Left colon (tissue), 2 donors: ENCODE measurements at regions of chr17 and their contacts with region 1.

Region 1: DNA sequence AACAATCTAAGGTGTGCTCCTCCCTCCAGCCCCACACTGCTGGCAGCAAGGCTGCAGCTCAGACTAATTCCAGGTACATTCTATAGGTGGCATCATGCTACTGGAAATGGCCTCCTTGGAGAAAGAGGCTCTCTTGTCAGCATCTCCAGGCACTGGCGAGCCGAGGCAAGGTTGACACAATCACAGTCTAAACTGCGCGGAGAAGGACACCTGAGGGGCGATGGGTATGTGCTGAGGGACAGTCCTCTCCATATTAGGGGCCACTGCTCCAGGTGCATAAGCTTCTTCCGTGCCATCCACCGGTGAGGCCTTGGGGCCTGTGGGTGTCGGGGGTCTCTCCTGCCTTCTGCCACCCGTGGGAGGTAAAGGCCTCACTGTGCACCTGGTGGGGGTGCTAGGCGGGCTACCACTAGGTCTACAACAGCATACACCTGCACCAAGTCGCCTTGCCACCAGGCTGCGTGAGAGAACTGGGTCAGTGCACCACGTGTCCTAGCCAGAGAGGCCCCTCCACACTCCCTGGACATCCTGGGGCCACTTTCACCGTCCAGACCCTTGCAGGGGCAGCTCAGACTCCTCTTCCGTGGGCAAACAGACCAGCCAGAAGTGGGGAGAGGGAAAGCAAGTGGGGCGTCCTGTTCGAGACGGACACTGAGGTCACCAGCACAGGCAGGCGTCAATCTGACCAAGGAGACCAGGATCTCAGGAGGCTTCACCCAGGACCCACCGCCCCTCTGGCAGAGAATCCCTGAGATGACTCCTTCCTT is 12.1 kb upstream of the CBX8 start:
- DNase-seq: peak; percentile 40 to 53
- ATAC-seq: peak; percentile 75

Region 2: GRCh38 chr17:79839363-79840268 is 30.7 kb after region 1 on chr17 and contains the start of gene CBX4:
- intact Hi-C with region 1: loop called (anchors 5 kb)
- DNase-seq: peak; percentile 96
- ATAC-seq: peak; percentile 70
- total RNA-seq, gene CBX4: 12.1 to 14.5 TPM